Activated T-helper 1 cell treated with anti-CD3 and anti-CD28 coated beads, Interleukin-12 subunit alpha, Interleukin-12 subunit beta, Interleukin-2, Interleukin-4 antibody, amounts not matched to agents 30 ng/mL and 10 ng/mL and 1 ng/mL, durations not matched to agents 14 hours and 24 hours and 36 hours (primary cell): ENCODE measurements at regions of chr14 and their contacts with region 1.

Region 1: GRCh38 chr14:75709207-75709812 is 48.3 kb downstream of the TTLL5 start:
- DNase-seq: peak; percentile 45
- H3K4me3 Mint-ChIP-seq: no peak overlapping the region
- H3K27ac Mint-ChIP-seq: no peak overlapping the region
- H3K4me1 Mint-ChIP-seq: no peaks in the 10 kb centered on the region
- H3K27me3 Mint-ChIP-seq: no peaks in the 10 kb centered on the region

Region 2: GRCh38 chr14:75697386-75697785 is 11.9 kb before region 1 on chr14:
- intact Hi-C with region 1: no loop called
- DNase-seq: no peak
- H3K4me3 Mint-ChIP-seq: no peak overlapping the region
- H3K27ac Mint-ChIP-seq: no peak overlapping the region
- H3K4me1 Mint-ChIP-seq: no peaks in the 10 kb centered on the region
- H3K27me3 Mint-ChIP-seq: no peaks in the 10 kb centered on the region

Region 3: GRCh38 chr14:75794615-75795038 is 85.3 kb after region 1 on chr14:
- intact Hi-C with region 1: loop called (anchors 5 kb)
- DNase-seq: no peak
- H3K4me3 Mint-ChIP-seq: no peak overlapping the region
- H3K27ac Mint-ChIP-seq: no peak overlapping the region
- H3K4me1 Mint-ChIP-seq: no peaks in the 10 kb centered on the region
- H3K27me3 Mint-ChIP-seq: no peaks in the 10 kb centered on the region

Region 4: GRCh38 chr14:75851574-75851866 is 142.2 kb after region 1 on chr14:
- intact Hi-C with region 1: no loop called
- DNase-seq: no peak
- H3K4me3 Mint-ChIP-seq: no peak overlapping the region
- H3K27ac Mint-ChIP-seq: no peak overlapping the region
- H3K4me1 Mint-ChIP-seq: no peaks in the 10 kb centered on the region
- H3K27me3 Mint-ChIP-seq: no peaks in the 10 kb centered on the region

Region 5: GRCh38 chr14:75906676-75907280 is 197.5 kb after region 1 on chr14:
- intact Hi-C with region 1: loop called (anchors 1 kb)
- DNase-seq: peak; percentile 40
- H3K4me3 Mint-ChIP-seq: no peak overlapping the region
- H3K27ac Mint-ChIP-seq: no peak overlapping the region
- H3K4me1 Mint-ChIP-seq: no peaks in the 10 kb centered on the region
- H3K27me3 Mint-ChIP-seq: no peaks in the 10 kb centered on the region

Region 6: DNA sequence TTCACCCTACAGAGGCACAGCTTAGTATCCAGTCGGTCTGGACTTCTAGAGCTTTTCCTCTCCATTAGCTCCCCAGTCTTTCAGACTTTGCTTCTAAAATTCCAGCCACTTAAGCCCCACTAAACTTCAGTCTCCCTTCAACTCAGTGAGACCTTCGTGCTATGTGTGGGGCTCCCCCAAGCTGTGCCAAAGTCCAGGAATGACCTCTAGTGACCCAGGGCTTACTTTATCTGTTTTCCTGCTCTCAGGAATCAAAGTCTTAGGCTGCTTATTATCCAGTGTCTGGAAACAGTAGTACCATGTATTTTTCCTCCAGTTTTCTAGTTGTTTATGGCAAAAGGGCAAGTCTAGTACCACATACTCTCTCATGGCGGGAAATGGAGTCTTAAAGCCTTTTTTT is 354.0 kb after region 1 on chr14:
- intact Hi-C with region 1: no loop called
- DNase-seq: no peak
- H3K4me3 Mint-ChIP-seq: no peak overlapping the region
- H3K27ac Mint-ChIP-seq: no peak overlapping the region
- H3K4me1 Mint-ChIP-seq: no peaks in the 10 kb centered on the region
- H3K27me3 Mint-ChIP-seq: peaks cover 2% of the 10 kb centered on the region

Region 7: DNA sequence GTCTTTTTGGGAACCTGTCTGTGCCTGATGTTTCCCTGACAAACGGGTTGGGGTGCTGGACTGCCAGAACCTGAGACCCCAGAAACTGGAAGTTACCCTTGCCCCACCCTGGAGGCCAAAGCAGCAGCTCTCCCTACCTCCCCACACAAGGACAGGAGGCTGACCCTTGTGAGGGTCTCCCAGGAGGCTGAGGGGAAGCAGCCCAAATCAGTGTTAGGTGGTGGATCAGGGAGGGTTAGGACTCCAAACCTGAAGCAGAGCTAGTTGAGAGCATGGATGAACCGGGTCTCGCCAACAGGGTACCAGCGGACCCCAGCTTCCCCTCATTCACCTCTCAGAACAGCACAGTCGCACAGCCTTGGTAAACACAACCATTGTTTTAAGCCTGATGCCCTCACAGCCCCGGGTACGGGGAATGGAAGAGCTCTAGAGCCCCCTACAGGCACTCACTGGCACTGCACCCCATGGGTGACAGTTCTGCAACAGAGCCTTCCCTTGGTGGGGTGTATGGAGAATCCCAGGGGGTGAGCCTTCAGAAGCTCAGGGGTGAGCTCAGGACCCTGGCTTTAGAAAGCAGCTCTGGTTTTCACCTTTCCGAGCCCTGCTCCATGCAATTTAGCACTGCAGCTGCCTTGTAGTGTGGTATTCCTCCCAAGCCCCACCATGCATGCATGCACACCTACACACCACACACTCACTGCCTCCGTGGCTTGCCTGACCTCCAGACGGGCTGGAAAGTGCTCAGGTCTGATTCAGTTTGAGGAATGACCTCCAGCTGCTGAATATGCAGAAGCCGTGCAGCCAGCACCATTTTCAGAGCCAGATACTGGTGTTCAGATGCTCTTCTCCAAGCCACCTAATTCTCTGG is 677.8 kb after region 1 on chr14:
- intact Hi-C with region 1: loop called (anchors 1 kb)
- DNase-seq: peak; percentile 49
- H3K4me3 Mint-ChIP-seq: no peak overlapping the region
- H3K27ac Mint-ChIP-seq: no peak overlapping the region
- H3K4me1 Mint-ChIP-seq: no peaks in the 10 kb centered on the region
- H3K27me3 Mint-ChIP-seq: peaks cover 18% of the 10 kb centered on the region